ENCODE measurements at regions of chr2 and their contacts with region 1.

Region 1: GRCh38 chr2:134446383-134447017 is 192.6 kb downstream of the MGAT5 start:
- DNase-seq: no peak
- ATAC-seq: no peak
- H3K4me3 ChIP-seq: no peak overlapping the region
- H3K27ac ChIP-seq: peak overlapping the region; percentile 5 to 55 (median 44)
- H3K4me1 ChIP-seq: peaks cover 63% of the 10 kb centered on the region
- H3K27me3 ChIP-seq: no peaks in the 10 kb centered on the region
- CTCF ChIP-seq: no peak
- POLR2A ChIP-seq: no peak

Region 2: GRCh38 chr2:134391751-134392160 is 54.7 kb before region 1 on chr2:
- intact Hi-C with region 1: loop called (anchors 10 kb)
- DNase-seq: peak in 1 of 4 donors; percentile 11
- ATAC-seq: no peak
- H3K4me3 ChIP-seq: no peak overlapping the region
- H3K27ac ChIP-seq: no peak overlapping the region
- H3K4me1 ChIP-seq: peaks cover 3% of the 10 kb centered on the region
- H3K27me3 ChIP-seq: no peaks in the 10 kb centered on the region
- CTCF ChIP-seq: no peak
- POLR2A ChIP-seq: no peak